Activated CD8-positive, alpha-beta memory T cell treated with anti-CD3 and anti-CD28 coated beads, Interleukin-2, amount 10 ng/mL, durations not matched to agents 7 days and 5 days (primary cell): ENCODE measurements at regions of chr9 and their contacts with region 1.

Region 1: GRCh38 chr9:109440797-109441287 is 57.3 kb downstream of the PTPN3 start:
- DNase-seq: peak; percentile 82
- ATAC-seq: peak; percentile 93
- H3K4me3 Mint-ChIP-seq: no peak overlapping the region
- H3K27ac Mint-ChIP-seq: peak overlapping the region; percentile 71
- H3K4me1 Mint-ChIP-seq: peaks cover 26% of the 10 kb centered on the region
- H3K27me3 Mint-ChIP-seq: peaks cover 37% of the 10 kb centered on the region

Region 2: GRCh38 chr9:109182940-109183798 is 257.7 kb before region 1 on chr9:
- CTCF ChIA-PET with region 1: no interaction called
- DNase-seq: no peak
- ATAC-seq: no peak
- H3K4me3 Mint-ChIP-seq: no peak overlapping the region
- H3K27ac Mint-ChIP-seq: no peak overlapping the region
- H3K4me1 Mint-ChIP-seq: peaks cover 6% of the 10 kb centered on the region
- H3K27me3 Mint-ChIP-seq: peaks cover 10% of the 10 kb centered on the region

Region 3: DNA sequence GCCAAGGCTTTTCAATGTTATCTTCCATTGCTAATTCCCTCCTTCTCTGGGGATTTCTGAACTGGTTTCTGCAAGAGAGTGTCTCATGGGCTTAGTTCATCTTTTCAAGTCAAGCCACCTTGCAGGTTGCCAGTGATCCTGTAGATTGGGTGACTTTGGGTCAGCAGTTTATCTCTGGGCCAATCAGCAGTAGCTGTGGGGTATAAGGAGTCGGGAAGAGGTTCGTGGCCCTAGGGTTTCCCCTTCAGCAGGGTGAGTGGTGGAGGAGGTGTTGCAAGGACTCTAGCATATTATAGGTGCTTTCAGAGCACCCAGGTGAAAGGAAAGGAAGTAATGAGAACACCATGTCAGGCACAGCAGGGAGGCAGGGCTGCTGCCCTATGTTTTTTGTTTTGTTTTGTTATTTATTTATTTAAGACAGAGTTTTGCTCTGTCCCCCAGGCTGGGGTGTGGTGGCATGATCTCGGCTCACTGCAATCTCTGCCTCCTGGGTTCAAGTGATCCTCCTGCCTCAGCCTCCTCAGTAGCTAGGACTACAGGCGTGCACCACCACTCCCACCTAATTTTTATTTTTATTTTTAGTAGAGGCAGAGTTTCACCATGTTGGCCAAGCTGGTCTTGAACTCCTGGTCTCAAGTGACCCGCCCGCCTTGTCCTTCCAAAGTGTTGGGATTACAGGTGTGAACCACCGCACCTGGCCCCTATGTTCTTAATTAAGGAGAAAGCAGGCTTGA is 85.5 kb before region 1 on chr9:
- CTCF ChIA-PET with region 1: no interaction called
- DNase-seq: no peak
- ATAC-seq: no peak
- H3K4me3 Mint-ChIP-seq: no peak overlapping the region
- H3K27ac Mint-ChIP-seq: no peak overlapping the region
- H3K4me1 Mint-ChIP-seq: no peaks in the 10 kb centered on the region
- H3K27me3 Mint-ChIP-seq: peaks cover 6% of the 10 kb centered on the region

Region 4: DNA sequence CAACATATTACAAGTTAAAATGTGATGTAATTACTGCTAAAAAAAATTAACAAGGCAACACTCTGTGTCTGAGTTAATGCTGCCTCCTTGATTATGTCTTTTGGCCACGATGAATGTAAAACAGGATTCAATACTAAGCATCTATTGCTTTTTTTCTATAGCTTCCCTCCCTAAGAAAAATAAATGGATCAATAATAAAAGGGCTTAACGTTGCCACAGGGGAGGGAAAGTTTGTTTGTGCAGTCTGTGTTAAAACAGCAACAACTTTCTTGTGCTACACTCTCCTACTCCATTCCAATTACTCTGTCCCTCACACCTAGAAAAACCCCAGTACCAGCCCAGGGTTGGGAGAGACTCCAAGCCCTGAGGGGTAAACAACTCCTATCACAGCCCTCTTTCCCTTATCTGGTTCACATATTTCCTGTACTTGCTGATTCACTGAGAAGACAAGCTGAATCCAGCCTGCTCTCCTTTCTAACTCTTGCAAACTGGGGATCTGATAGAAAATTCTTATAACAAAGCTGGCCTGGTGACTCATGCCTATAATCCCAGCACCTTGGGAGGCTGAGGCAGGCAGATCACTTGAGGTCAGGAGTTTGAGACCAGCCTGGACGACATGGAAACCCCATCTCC is 12.5 kb after region 1 on chr9:
- CTCF ChIA-PET with region 1: interaction called, 21 read pairs
- DNase-seq: no peak
- ATAC-seq: no peak
- H3K4me3 Mint-ChIP-seq: no peak overlapping the region
- H3K27ac Mint-ChIP-seq: no peak overlapping the region
- H3K4me1 Mint-ChIP-seq: peaks cover 15% of the 10 kb centered on the region
- H3K27me3 Mint-ChIP-seq: peaks cover 31% of the 10 kb centered on the region

Region 5: DNA sequence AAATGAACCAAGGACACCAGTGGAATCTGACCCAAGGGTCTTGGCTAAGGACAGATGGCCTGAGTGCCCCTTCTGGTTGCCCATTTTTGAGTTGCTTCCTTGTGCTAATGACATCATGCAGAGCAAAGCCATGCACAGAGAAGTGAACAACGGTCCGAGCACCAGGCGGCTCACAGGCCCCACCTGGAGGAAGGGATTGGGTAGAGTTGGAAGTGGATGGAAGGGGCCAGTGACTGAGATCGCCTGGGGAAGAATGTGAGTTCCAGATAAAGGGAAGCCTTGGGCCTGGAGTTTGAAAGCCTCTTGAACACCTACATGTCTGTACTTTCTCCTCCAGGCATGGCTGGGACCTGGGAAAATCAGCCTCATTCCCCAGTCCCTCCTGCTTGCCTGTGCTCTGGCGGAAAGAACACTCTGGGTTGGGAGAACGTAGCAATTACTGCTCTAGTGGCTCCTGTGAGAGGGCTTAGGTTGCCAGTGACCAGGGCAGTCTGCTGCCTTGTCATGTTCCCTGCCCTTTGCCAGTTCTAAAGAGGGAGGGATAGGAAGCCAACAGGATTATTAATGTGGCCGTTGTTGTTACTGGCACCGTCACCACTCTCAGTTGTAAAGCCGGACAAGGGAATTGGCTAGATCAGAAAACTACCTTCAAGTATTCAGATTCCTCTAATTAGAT is 119.8 kb after region 1 on chr9:
- CTCF ChIA-PET with region 1: no interaction called
- DNase-seq: no peak
- ATAC-seq: no peak
- H3K4me3 Mint-ChIP-seq: no peak overlapping the region
- H3K27ac Mint-ChIP-seq: no peak overlapping the region
- H3K4me1 Mint-ChIP-seq: no peaks in the 10 kb centered on the region
- H3K27me3 Mint-ChIP-seq: no peaks in the 10 kb centered on the region